Endothelial cell of umbilical vein (primary cell): ENCODE measurements at regions of chr1 and their contacts with region 1.

Region 1: DNA sequence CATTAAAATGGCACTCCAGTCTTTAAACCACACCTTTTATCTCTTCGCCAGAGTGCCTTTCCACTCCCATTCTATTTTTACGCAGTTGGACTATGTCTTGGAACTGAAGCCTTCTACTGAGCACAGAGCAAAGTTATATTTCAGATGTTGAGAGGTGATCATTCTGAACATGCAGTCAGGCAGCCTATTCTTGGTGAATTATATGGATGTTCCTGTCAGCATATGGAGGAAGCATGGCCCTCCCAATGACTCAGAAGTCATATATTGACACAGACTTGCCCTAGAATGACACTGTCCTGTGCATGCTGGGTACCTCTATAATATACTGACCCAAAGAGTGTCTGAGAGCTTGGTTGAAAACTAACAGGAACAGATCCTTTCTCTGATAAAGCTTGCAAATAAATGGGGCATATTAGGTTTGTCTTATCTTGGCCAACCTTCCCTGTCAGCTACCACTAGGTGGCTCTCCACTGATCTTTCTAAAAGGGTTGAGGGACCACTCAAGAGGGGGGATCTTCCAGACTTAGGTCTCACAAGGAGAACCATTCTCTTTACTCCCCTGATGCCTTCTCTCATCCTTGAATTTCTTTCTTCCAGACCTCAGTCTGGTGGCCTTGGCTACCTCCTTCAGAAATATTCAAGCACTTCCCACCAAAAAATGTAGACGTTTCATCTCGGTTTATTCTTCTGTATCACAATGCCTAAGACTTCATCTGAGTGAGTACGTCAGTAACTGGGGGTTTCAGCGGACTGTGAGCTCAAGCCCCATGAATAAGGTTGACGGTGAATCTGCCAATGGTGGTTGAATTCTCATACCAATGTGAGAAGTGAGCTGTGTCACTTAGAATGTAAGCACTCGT is 11.8 kb upstream of the ALG14 start:
- DNase-seq: peak; percentile 39
- H3K4me3 ChIP-seq: no peak overlapping the region
- H3K27ac ChIP-seq: no peak overlapping the region
- H3K4me1 ChIP-seq: peaks cover 16% of the 10 kb centered on the region
- H3K27me3 ChIP-seq: peaks cover 9 to 17% of the 10 kb centered on the region in 2 experiments
- CTCF ChIP-seq: peak; percentile 59 to 60
- POLR2A ChIP-seq: no peak

Region 2: GRCh38 chr1:95072532-95073419 is 11.8 kb before region 1 on chr1 and contains the start of gene ALG14:
- CTCF ChIA-PET with region 1: interaction called, 37 read pairs
- POLR2A ChIA-PET with region 1: interaction called, 3 read pairs
- dilution Hi-C with region 1: no loop called
- intact Hi-C with region 1: no loop called
- DNase-seq: peak; percentile 97
- H3K4me3 ChIP-seq: peak within 1 kb of the TSS; percentile 25 to 75 (median 65)
- H3K27ac ChIP-seq: peak within 1 kb of the TSS; percentile 50
- H3K4me1 ChIP-seq: peaks cover 7% of the 10 kb centered on the region
- H3K27me3 ChIP-seq: peaks cover 1 to 5% of the 10 kb centered on the region in 2 experiments
- CTCF ChIP-seq: no peak
- POLR2A ChIP-seq: peak; percentile 69
- total RNA-seq, gene ALG14: 8.6 and 12.3 TPM in 2 replicates

Region 3: GRCh38 chr1:95098196-95098595 is 13.6 kb after region 1 on chr1:
- CTCF ChIA-PET with region 1: interaction called, 10 read pairs
- POLR2A ChIA-PET with region 1: no interaction called
- dilution Hi-C with region 1: no loop called
- intact Hi-C with region 1: no loop called
- DNase-seq: no peak
- H3K4me3 ChIP-seq: no peak overlapping the region
- H3K27ac ChIP-seq: no peak overlapping the region
- H3K4me1 ChIP-seq: no peaks in the 10 kb centered on the region
- H3K27me3 ChIP-seq: peaks cover 0 to 7% of the 10 kb centered on the region in 2 experiments
- CTCF ChIP-seq: no peak
- POLR2A ChIP-seq: no peak

Region 4: GRCh38 chr1:95116580-95117206 is 32.1 kb after region 1 on chr1:
- CTCF ChIA-PET with region 1: interaction called, 30 read pairs
- POLR2A ChIA-PET with region 1: no interaction called
- dilution Hi-C with region 1: no loop called
- intact Hi-C with region 1: loop called (anchors 1 kb)
- DNase-seq: peak; percentile 50
- H3K4me3 ChIP-seq: peak overlapping the region; percentile 4 to 57 (median 38)
- H3K27ac ChIP-seq: no peak overlapping the region
- H3K4me1 ChIP-seq: no peaks in the 10 kb centered on the region
- H3K27me3 ChIP-seq: peaks cover 25 to 35% of the 10 kb centered on the region in 2 experiments
- CTCF ChIP-seq: peak; percentile 45 to 78
- POLR2A ChIP-seq: no peak

Region 5: DNA sequence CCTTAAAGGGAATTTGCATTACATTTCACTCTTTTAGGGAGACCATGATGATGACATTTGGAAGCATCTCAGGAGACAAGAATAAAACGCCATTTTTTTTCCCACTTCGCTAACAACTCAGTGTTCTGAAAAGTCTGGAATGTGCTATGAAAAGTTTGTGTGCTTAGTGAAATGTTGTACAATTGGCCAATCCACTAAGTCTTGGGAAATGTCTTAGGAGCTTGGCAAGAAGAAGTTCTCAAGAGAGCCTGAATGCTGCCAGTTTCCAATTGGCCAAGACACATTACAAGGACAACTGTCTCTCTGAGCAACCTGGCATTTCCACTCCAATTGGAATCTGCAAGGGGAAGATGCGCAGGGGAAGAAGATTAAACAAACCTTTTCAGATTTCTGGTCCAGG is 551.3 kb after region 1 on chr1:
- CTCF ChIA-PET with region 1: no interaction called
- POLR2A ChIA-PET with region 1: no interaction called
- dilution Hi-C with region 1: no loop called
- intact Hi-C with region 1: no loop called
- DNase-seq: no peak
- H3K4me3 ChIP-seq: no peak overlapping the region
- H3K27ac ChIP-seq: no peak overlapping the region
- H3K4me1 ChIP-seq: no peaks in the 10 kb centered on the region
- H3K27me3 ChIP-seq: no peaks in the 10 kb centered on the region
- CTCF ChIP-seq: no peak
- POLR2A ChIP-seq: no peak